AG04449 (cell line): ENCODE measurements at regions of chr5 and their contacts with region 1.

Region 1: DNA sequence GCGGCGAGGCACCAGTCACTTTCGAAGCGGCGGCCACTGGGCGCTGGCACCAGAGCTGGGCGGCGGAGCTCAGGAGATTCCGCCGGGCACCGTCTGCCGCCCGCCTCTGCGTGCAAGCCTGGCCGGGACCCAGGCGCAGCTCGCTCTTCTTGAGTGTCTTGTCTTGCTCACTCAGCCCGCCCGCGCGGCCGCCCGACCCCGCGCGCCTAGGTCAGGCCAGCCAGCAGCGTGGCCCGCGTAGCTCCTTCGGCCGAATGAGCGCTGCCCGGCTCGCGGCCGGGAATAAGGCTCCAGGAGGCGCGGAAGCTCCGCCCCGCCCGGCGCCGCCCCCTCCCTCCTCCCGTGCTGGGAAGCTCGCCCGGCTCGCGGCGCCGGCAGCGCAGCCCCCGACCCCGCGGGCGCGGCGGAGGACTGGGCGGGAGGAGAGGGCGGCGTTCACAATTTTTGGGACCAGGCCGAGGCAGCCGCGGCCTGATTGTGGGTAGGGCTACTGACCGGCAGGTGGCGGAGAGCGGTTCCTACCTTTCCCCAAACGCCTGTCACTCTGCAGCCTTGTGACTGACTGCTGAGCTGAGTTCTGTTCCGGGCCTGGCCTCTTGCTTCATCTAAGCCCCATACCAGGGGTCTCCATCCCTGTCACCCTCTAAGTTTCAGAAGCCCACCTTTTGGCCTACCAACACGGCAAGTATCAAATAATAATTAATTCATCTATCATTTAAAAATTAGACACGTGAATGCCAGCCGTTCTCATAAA is at the start of gene HBEGF:
- DNase-seq: no peak
- H3K4me3 ChIP-seq: peak within 1 kb of the TSS; percentile 79
- CTCF ChIP-seq: peak; percentile 46

Region 2: DNA sequence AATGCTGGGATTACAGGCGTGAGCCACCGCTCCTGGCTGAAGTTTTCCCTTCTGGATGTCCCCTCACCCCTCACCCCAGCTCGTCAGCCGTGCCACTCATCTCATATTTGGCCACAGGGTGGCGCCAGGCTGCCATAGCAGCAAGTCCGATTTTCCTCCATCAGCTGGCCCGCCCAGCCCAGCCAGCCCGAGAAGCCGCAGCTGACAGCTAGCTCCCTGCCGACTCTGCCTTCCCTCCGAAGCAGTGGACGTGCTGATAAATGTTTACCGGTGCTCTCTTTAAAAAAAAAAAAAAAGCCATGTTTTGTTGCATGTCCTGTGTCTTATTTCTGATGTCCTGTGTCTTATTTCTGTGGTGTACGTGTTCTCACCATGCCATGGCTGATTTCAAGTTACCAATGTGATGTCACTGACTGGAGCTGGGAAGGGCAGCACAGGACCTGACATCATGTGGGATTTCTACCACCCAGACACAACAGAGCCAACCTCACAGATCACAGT is 102.0 kb before region 1 on chr5:
- CTCF ChIA-PET with region 1: interaction called, 1,796 read pairs
- POLR2A ChIA-PET with region 1: interaction called, 64 read pairs
- DNase-seq: peak; percentile 52
- H3K4me3 ChIP-seq: no peak overlapping the region
- CTCF ChIP-seq: peak; percentile 87

Region 3: DNA sequence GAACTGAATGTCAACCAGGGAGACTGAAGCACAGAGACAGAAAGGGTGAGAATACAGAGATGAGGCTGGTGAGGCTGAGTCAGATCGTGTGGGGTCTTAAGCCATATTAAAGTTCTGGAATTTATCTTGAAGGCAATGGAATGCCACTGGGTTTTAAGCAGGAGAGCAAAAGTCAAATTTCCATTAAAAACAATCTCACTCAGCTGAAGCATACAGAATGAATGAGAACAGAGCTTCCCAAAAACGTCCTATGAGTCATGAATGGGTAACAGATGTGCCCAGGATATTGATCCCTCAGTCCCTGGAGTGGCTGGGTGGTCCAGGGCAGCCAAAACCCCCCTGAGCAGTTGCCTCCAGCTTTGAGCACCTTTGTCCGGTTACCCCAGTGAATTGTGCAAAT is 88.5 kb before region 1 on chr5:
- CTCF ChIA-PET with region 1: interaction called, 1,796 read pairs
- POLR2A ChIA-PET with region 1: interaction called, 29 read pairs
- DNase-seq: no peak
- H3K4me3 ChIP-seq: no peak overlapping the region
- CTCF ChIP-seq: no peak

Region 4: GRCh38 chr5:140312067-140312790 is 34.3 kb before region 1 on chr5:
- CTCF ChIA-PET with region 1: interaction called, 22 read pairs
- POLR2A ChIA-PET with region 1: interaction called, 6 read pairs
- DNase-seq: peak; percentile 68
- H3K4me3 ChIP-seq: no peak overlapping the region
- CTCF ChIP-seq: no peak

Region 5: DNA sequence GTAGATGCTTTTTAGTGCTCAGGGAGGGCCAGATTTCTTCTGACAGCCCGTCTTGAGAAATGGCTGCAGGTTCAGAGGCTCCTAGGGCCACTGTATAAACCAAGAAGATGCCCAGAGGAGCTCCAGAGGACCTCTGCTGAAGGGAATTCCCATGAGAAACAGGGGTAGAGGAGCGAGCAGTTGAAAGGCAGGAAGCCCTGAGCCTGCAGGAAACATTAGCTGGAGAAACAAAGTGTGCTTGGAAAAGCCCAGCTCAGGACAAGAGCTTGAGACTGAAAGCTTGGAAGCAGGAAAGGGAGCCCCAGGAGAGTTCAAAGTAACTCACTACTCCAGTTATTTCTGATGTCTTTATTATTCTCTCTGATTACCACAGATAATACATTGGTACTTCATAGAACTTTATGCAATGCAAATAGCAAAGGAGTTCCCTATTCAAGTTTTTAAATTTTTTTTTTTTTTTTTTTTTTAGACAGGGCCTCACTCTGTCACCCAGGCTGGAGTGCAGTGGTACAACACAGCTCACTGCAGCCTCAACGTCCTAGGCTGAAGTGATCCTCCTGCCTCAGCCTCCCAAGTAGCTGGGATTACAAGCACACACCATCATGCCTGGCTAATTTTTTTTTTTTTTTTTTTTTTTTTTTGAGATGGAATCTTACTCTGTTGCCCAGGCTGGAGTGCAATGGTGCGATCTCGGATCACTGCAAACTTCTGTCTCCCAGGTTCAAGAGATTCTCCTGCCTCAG is 16.6 kb before region 1 on chr5:
- CTCF ChIA-PET with region 1: interaction called, 28 read pairs
- POLR2A ChIA-PET with region 1: interaction called, 13 read pairs
- DNase-seq: no peak
- H3K4me3 ChIP-seq: no peak overlapping the region
- CTCF ChIP-seq: no peak

Region 6: GRCh38 chr5:140357726-140358093 is 11.2 kb after region 1 on chr5:
- CTCF ChIA-PET with region 1: interaction called, 177 read pairs
- POLR2A ChIA-PET with region 1: interaction called, 5 read pairs
- DNase-seq: no peak
- H3K4me3 ChIP-seq: peak overlapping the region; percentile 32
- CTCF ChIP-seq: peak; percentile 95

Region 7: GRCh38 chr5:140547508-140548299 is 201.2 kb after region 1 on chr5 and contains the start of gene EIF4EBP3:
- CTCF ChIA-PET with region 1: no interaction called
- POLR2A ChIA-PET with region 1: no interaction called
- DNase-seq: peak; percentile 77
- H3K4me3 ChIP-seq: peak within 1 kb of the TSS; percentile 49
- CTCF ChIP-seq: peak; percentile 70

Region 8: GRCh38 chr5:140575309-140575708 is 228.8 kb after region 1 on chr5:
- CTCF ChIA-PET with region 1: no interaction called
- POLR2A ChIA-PET with region 1: no interaction called
- DNase-seq: no peak
- H3K4me3 ChIP-seq: no peak overlapping the region
- CTCF ChIP-seq: peak; percentile 33